H1 (cell line): ENCODE measurements at regions of chr16 and their contacts with region 1.

Region 1: DNA sequence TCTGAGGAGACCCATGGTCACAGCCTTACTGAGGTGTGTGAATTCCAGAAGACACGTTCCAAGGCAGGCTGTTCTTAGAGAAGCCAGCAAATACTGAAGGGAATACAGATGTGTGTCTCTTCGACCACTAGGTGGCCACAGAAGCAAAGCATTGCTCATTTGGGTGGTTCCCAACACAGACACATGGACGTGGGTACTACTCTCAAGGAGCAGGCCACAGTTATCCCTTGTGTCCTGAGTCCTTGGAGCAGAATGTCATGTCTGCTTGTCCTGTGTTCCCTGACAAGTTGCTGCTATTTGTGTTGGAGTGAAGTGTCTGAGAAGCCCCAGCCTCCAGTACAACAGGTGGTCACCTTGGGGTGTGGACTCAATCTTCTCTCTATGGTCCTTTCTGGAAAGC is 30.3 kb downstream of the HMOX2 start:
- DNase-seq: peak in 1 of 2 experiments; percentile 56
- H3K4me3 ChIP-seq: no peak overlapping the region
- H3K27ac ChIP-seq: no peak overlapping the region
- H3K4me1 ChIP-seq: peaks cover 0 to 2% (median 0%) of the 10 kb centered on the region in 4 experiments; a peak in 2 of 7 replicates
- H3K27me3 ChIP-seq: no peaks in the 10 kb centered on the region
- CTCF ChIP-seq: peak; percentile 53 to 99 (median 81)
- EP300 ChIP-seq: no peak
- POLR2A ChIP-seq: no peak
- RAD21 ChIP-seq: peak; percentile 93

Region 2: DNA sequence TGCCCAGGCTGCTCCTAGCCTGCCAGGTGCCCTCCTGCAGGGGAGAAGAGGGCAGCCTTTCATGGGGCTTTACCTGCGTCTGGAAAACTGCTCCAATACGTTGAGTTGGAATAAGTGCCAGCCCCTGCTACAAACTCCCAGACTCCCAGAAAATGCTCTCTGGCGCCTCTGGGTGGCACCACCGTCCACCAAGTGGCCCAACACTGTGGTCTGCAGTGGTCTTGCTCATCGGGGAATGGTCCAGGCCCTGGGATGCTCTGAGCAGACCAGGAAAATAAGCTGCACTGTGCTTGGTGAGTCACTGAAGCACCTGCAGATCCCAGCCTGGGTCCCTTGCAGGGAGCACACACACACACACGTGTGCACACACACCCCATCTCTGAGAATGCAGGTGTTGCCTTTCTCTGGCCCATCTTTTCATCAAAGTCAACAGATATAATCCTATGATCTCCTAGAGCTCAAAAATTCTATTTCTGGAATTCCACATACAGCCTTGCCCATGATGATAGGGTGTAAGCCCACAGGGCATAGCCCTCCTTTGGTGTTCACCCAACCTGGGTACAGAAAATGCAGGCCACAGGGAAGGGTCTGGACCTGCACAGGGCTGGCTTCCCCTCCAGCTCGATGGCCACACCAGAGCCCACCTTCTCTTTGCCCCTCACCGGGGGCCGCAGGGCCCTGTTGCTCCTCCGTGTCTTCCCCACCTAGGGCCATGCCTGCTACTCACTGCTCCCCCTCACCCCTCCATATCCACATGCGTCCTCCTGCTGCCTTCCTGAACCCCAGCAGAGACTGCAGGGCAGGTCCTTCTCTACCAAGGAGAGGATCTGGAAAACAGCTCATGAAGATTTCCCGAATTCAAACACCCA is 11.6 kb after region 1 on chr16:
- CTCF ChIA-PET with region 1: interaction called, 163 read pairs
- POLR2A ChIA-PET with region 1: interaction called, 8 read pairs
- DNase-seq: peak in 1 of 2 experiments; percentile 79
- H3K4me3 ChIP-seq: no peak overlapping the region
- H3K27ac ChIP-seq: no peak overlapping the region; the same call in 1 of the 2 replicates
- H3K4me1 ChIP-seq: peaks cover 0 to 18% (median 13%) of the 10 kb centered on the region in 4 experiments; a peak in 6 of 7 replicates
- H3K27me3 ChIP-seq: no peaks in the 10 kb centered on the region
- CTCF ChIP-seq: peak; percentile 91 to 97 (median 94)
- EP300 ChIP-seq: no peak
- POLR2A ChIP-seq: 0 out of 3 replicates have a peak, but pooled peaks of 1 of the 2 experiments have one; percentile 27
- RAD21 ChIP-seq: peak; percentile 98 to 99

Region 3: GRCh38 chr16:4574919-4575705 is 68.7 kb after region 1 on chr16:
- CTCF ChIA-PET with region 1: interaction called, 134 read pairs
- POLR2A ChIA-PET with region 1: interaction called, 3 read pairs
- DNase-seq: peak; percentile 49 to 53
- H3K4me3 ChIP-seq: no peak overlapping the region
- H3K27ac ChIP-seq: no peak overlapping the region
- H3K4me1 ChIP-seq: peaks cover 7 to 11% (median 7%) of the 10 kb centered on the region in 4 experiments
- H3K27me3 ChIP-seq: no peaks in the 10 kb centered on the region
- CTCF ChIP-seq: peak; percentile 63 to 78 (median 70)
- EP300 ChIP-seq: no peak
- POLR2A ChIP-seq: no peak
- RAD21 ChIP-seq: peak; percentile 86 to 93

Region 4: DNA sequence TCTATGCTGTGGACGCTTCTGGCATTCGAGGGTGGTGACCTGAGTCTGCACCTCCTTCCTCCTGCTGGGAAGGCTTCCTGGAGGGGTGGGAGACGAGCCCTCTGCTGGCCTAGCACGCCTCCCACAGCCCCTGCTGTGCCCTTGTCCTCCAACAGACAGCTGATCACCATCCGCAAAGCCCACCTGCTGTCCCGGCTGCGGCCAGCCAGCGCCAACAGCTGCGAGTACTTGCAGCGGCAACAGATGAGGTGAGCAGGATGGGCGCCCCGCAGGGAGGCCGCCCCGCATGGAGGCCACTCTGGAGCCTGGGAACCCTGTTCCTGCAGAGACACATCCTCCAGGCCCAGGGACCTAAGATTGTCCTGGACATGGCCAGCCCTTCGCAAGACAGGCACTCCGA is 86.6 kb after region 1 on chr16:
- CTCF ChIA-PET with region 1: interaction called, 157 read pairs
- POLR2A ChIA-PET with region 1: no interaction called
- DNase-seq: peak; percentile 49 to 71
- H3K4me3 ChIP-seq: no peak overlapping the region
- H3K27ac ChIP-seq: no peak overlapping the region
- H3K4me1 ChIP-seq: peaks cover 0 to 18% (median 10%) of the 10 kb centered on the region in 4 experiments; a peak in 6 of 7 replicates
- H3K27me3 ChIP-seq: no peaks in the 10 kb centered on the region; a peak in 1 of 7 replicates
- CTCF ChIP-seq: no peak
- EP300 ChIP-seq: no peak; a peak in 1 of 3 replicates
- POLR2A ChIP-seq: no peak
- RAD21 ChIP-seq: no peak; a peak in 1 of 4 replicates

Region 5: GRCh38 chr16:4616047-4616811 is 109.8 kb after region 1 on chr16:
- CTCF ChIA-PET with region 1: interaction called, 11 read pairs
- POLR2A ChIA-PET with region 1: interaction called, 14 read pairs
- DNase-seq: peak; percentile 96 to 98
- H3K4me3 ChIP-seq: peak overlapping the region; percentile 35 to 62 (median 50)
- H3K27ac ChIP-seq: peak overlapping the region; percentile 98
- H3K4me1 ChIP-seq: peaks cover 0 to 48% (median 34%) of the 10 kb centered on the region in 4 experiments; a peak in 6 of 7 replicates
- H3K27me3 ChIP-seq: no peaks in the 10 kb centered on the region
- CTCF ChIP-seq: peak in 2 of 3 experiments; percentile 64 to 86; a peak in 3 of 4 replicates
- EP300 ChIP-seq: peak in 1 of 2 experiments; percentile 58; a peak in 1 of 3 replicates
- POLR2A ChIP-seq: peak in 1 of 2 experiments; percentile 61; a peak in 1 of 3 replicates
- RAD21 ChIP-seq: peak; percentile 24 to 49

Region 6: GRCh38 chr16:4649744-4650442 is 143.4 kb after region 1 on chr16:
- CTCF ChIA-PET with region 1: interaction called, 11 read pairs
- POLR2A ChIA-PET with region 1: interaction called, 3 read pairs
- DNase-seq: peak in 1 of 2 experiments; percentile 41
- H3K4me3 ChIP-seq: no peak overlapping the region
- H3K27ac ChIP-seq: no peak overlapping the region
- H3K4me1 ChIP-seq: peaks cover 0 to 2% (median 0%) of the 10 kb centered on the region in 4 experiments; a peak in 2 of 7 replicates
- H3K27me3 ChIP-seq: no peaks in the 10 kb centered on the region
- CTCF ChIP-seq: no peak
- EP300 ChIP-seq: no peak
- POLR2A ChIP-seq: no peak
- RAD21 ChIP-seq: no peak

Region 7: GRCh38 chr16:4859900-4860255 is 353.4 kb after region 1 on chr16:
- CTCF ChIA-PET with region 1: no interaction called
- POLR2A ChIA-PET with region 1: no interaction called
- DNase-seq: no peak
- H3K4me3 ChIP-seq: no peak overlapping the region
- H3K27ac ChIP-seq: no peak overlapping the region
- H3K4me1 ChIP-seq: no peaks in the 10 kb centered on the region
- H3K27me3 ChIP-seq: no peaks in the 10 kb centered on the region
- CTCF ChIP-seq: no peak
- EP300 ChIP-seq: no peak
- POLR2A ChIP-seq: no peak
- RAD21 ChIP-seq: no peak